HepG2 (cell line): ENCODE measurements at regions of chr2 and their contacts with region 1.

Region 1: DNA sequence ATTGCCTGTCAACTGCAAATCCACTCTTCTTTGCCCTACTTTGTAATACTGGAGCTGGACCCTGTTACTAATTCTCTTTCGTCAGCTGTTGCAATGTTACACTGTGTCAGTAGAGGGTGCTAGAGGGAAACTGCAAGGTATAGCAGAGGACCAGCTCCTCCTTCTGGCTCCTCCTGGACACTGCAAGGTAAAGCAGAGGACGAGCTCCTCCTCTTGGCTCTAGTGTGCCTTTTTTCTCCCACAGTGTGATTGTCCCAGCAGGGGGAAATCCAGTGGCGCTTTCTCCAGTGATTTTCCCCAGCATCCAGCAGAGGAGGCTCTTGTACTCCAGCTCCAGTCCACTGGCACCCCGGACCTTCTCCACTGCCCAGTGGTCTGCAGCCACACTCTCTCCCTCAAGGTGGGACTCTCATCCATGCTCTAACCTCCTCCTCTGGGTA is 95.6 kb downstream of the CAPN13 start:
- DNase-seq: peak; percentile 94
- ATAC-seq: peak; percentile 89
- H3K4me3 ChIP-seq: no peak overlapping the region
- H3K27ac ChIP-seq: no peak overlapping the region
- H3K4me1 ChIP-seq: no peaks in the 10 kb centered on the region
- H3K27me3 ChIP-seq: peaks cover 0 to 6% of the 10 kb centered on the region in 2 experiments; a peak in 1 of 5 replicates
- CTCF ChIP-seq: peak; percentile 99
- EP300 ChIP-seq: 0 out of 4 replicates have a peak, but pooled peaks of 1 of the 2 experiments have one; percentile 12
- POLR2A ChIP-seq: no peak
- RAD21 ChIP-seq: peak; percentile 94

Region 2: GRCh38 chr2:29430382-29431112 is 1281.1 kb before region 1 on chr2:
- CTCF ChIA-PET with region 1: no interaction called
- POLR2A ChIA-PET with region 1: no interaction called
- in situ Hi-C with region 1: no loop called
- intact Hi-C with region 1: no loop called
- DNase-seq: no peak
- ATAC-seq: no peak
- H3K4me3 ChIP-seq: no peak overlapping the region
- H3K27ac ChIP-seq: no peak overlapping the region
- H3K4me1 ChIP-seq: no peaks in the 10 kb centered on the region
- H3K27me3 ChIP-seq: no peaks in the 10 kb centered on the region
- CTCF ChIP-seq: no peak
- EP300 ChIP-seq: no peak
- POLR2A ChIP-seq: no peak
- RAD21 ChIP-seq: no peak

Region 3: GRCh38 chr2:30165050-30165520 is 546.6 kb before region 1 on chr2:
- CTCF ChIA-PET with region 1: interaction called, 59 read pairs
- POLR2A ChIA-PET with region 1: no interaction called
- in situ Hi-C with region 1: loop called (anchors 5 kb)
- intact Hi-C with region 1: loop called (anchors 1 kb)
- DNase-seq: peak; percentile 95
- ATAC-seq: peak; percentile 99
- H3K4me3 ChIP-seq: no peak overlapping the region
- H3K27ac ChIP-seq: no peak overlapping the region
- H3K4me1 ChIP-seq: no peaks in the 10 kb centered on the region
- H3K27me3 ChIP-seq: peaks cover 0 to 14% of the 10 kb centered on the region in 2 experiments; a peak in 2 of 5 replicates
- CTCF ChIP-seq: peak; percentile 83
- EP300 ChIP-seq: no peak
- POLR2A ChIP-seq: no peak
- RAD21 ChIP-seq: peak; percentile 78

Region 4: GRCh38 chr2:30447149-30448045 is 264.3 kb before region 1 on chr2 and contains the start of gene LCLAT1:
- CTCF ChIA-PET with region 1: no interaction called
- POLR2A ChIA-PET with region 1: no interaction called
- in situ Hi-C with region 1: loop called (anchors 10 kb)
- intact Hi-C with region 1: loop called (anchors 5 kb)
- DNase-seq: peak; percentile 59
- ATAC-seq: peak; percentile 91
- H3K4me3 ChIP-seq: peak within 1 kb of the TSS; percentile 71 to 93 (median 83)
- H3K27ac ChIP-seq: peak within 1 kb of the TSS; percentile 65
- H3K4me1 ChIP-seq: peaks cover 54% of the 10 kb centered on the region
- H3K27me3 ChIP-seq: no peaks in the 10 kb centered on the region; a peak in 1 of 5 replicates
- CTCF ChIP-seq: peak; percentile 44
- EP300 ChIP-seq: no peak
- POLR2A ChIP-seq: peak; percentile 53 to 73
- RAD21 ChIP-seq: no peak; the same call in none of the 2 replicates
- total RNA-seq, gene LCLAT1: 25.3 and 28.0 TPM in 2 replicates

Region 5: GRCh38 chr2:30747211-30747610 is 35.5 kb after region 1 on chr2:
- CTCF ChIA-PET with region 1: no interaction called
- POLR2A ChIA-PET with region 1: no interaction called
- in situ Hi-C with region 1: no loop called
- intact Hi-C with region 1: no loop called
- DNase-seq: no peak
- ATAC-seq: 0 out of 3 replicates have a peak, but pooled peaks have one; percentile 43
- H3K4me3 ChIP-seq: no peak overlapping the region
- H3K27ac ChIP-seq: no peak overlapping the region
- H3K4me1 ChIP-seq: no peaks in the 10 kb centered on the region
- H3K27me3 ChIP-seq: peaks cover 2 to 38% of the 10 kb centered on the region in 2 experiments; a peak in 3 of 5 replicates
- CTCF ChIP-seq: no peak
- EP300 ChIP-seq: no peak
- POLR2A ChIP-seq: no peak
- RAD21 ChIP-seq: no peak

Region 6: GRCh38 chr2:30915486-30915885 is 203.8 kb after region 1 on chr2:
- CTCF ChIA-PET with region 1: interaction called, 3 read pairs
- POLR2A ChIA-PET with region 1: no interaction called
- in situ Hi-C with region 1: no loop called
- intact Hi-C with region 1: loop called (anchors 2 kb)
- DNase-seq: peak; percentile 22
- ATAC-seq: peak; percentile 94
- H3K4me3 ChIP-seq: no peak overlapping the region
- H3K27ac ChIP-seq: no peak overlapping the region
- H3K4me1 ChIP-seq: no peaks in the 10 kb centered on the region
- H3K27me3 ChIP-seq: no peaks in the 10 kb centered on the region; a peak in 1 of 5 replicates
- CTCF ChIP-seq: peak; percentile 58
- EP300 ChIP-seq: no peak
- POLR2A ChIP-seq: no peak
- RAD21 ChIP-seq: no peak

Region 7: GRCh38 chr2:30979822-30980245 is 268.2 kb after region 1 on chr2:
- CTCF ChIA-PET with region 1: no interaction called
- POLR2A ChIA-PET with region 1: no interaction called
- in situ Hi-C with region 1: no loop called
- intact Hi-C with region 1: no loop called
- DNase-seq: no peak
- ATAC-seq: peak; percentile 64
- H3K4me3 ChIP-seq: no peak overlapping the region
- H3K27ac ChIP-seq: no peak overlapping the region
- H3K4me1 ChIP-seq: no peaks in the 10 kb centered on the region
- H3K27me3 ChIP-seq: peaks cover 0 to 18% of the 10 kb centered on the region in 2 experiments; a peak in 1 of 5 replicates
- CTCF ChIP-seq: no peak
- EP300 ChIP-seq: no peak
- POLR2A ChIP-seq: no peak
- RAD21 ChIP-seq: no peak

Region 8: GRCh38 chr2:31012406-31012805 is 300.7 kb after region 1 on chr2:
- CTCF ChIA-PET with region 1: no interaction called
- POLR2A ChIA-PET with region 1: no interaction called
- in situ Hi-C with region 1: no loop called
- intact Hi-C with region 1: no loop called
- DNase-seq: no peak
- ATAC-seq: no peak
- H3K4me3 ChIP-seq: no peak overlapping the region
- H3K27ac ChIP-seq: no peak overlapping the region
- H3K4me1 ChIP-seq: no peaks in the 10 kb centered on the region
- H3K27me3 ChIP-seq: peaks cover 0 to 22% of the 10 kb centered on the region in 2 experiments; a peak in 2 of 5 replicates
- CTCF ChIP-seq: no peak
- EP300 ChIP-seq: no peak
- POLR2A ChIP-seq: no peak
- RAD21 ChIP-seq: no peak

Region 9: GRCh38 chr2:31170071-31170698 is 458.5 kb after region 1 on chr2:
- CTCF ChIA-PET with region 1: interaction called, 22 read pairs
- POLR2A ChIA-PET with region 1: no interaction called
- in situ Hi-C with region 1: loop called (anchors 5 kb)
- intact Hi-C with region 1: no loop called
- DNase-seq: peak; percentile 52
- ATAC-seq: peak; percentile 96
- H3K4me3 ChIP-seq: no peak overlapping the region
- H3K27ac ChIP-seq: no peak overlapping the region
- H3K4me1 ChIP-seq: no peaks in the 10 kb centered on the region
- H3K27me3 ChIP-seq: no peaks in the 10 kb centered on the region
- CTCF ChIP-seq: peak; percentile 91
- EP300 ChIP-seq: no peak
- POLR2A ChIP-seq: no peak
- RAD21 ChIP-seq: peak; percentile 70

Region 10: GRCh38 chr2:31523871-31524492 is 812.3 kb after region 1 on chr2:
- CTCF ChIA-PET with region 1: interaction called, 9 read pairs
- POLR2A ChIA-PET with region 1: no interaction called
- in situ Hi-C with region 1: no loop called
- intact Hi-C with region 1: loop called (anchors 1 kb)
- DNase-seq: peak; percentile 56
- ATAC-seq: peak; percentile 90
- H3K4me3 ChIP-seq: no peak overlapping the region
- H3K27ac ChIP-seq: no peak overlapping the region
- H3K4me1 ChIP-seq: no peaks in the 10 kb centered on the region
- H3K27me3 ChIP-seq: peaks cover 0 to 38% of the 10 kb centered on the region in 2 experiments; a peak in 2 of 5 replicates
- CTCF ChIP-seq: peak; percentile 69
- EP300 ChIP-seq: no peak
- POLR2A ChIP-seq: no peak
- RAD21 ChIP-seq: no peak